Endothelial cell of umbilical vein (primary cell): ENCODE measurements at regions of chr9 and their contacts with region 1.

Region 1: DNA sequence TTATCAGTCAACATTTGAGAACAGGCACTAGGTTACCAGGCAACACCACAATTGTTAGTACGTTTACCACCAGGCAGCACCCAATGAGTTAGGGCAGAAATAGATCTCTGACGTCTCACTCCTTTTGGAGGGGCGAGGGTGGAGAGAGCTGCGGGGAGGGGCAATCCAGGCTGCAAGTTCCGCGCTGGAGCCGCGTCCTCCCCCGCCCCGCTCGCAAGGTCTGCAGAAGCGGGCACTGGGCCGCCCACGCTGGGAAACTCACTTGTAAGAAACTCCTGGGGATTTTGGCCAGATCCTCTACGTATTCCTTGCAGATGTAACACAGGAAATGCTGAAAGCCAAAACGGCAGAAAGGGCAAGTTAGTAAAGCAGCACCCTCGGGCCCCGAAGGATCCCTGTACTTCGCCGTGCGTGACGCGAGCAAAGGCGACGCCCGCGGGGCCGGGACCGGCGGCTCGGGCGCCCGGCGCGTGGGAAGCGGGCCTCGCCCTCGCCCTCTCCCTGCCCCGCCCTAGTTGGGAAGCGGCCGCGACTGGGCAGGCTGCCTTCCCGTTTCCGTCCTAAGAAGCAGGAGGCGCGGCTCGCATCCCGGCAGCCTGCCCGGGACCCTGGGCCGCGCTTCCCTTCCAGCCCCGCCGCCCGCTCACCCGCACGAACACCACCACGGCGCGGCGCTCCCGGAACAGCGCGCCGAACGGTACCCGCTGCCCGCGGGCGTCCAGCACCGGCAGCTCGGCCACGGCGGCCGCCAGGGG is 497 bp downstream of the PRXL2C start:
- DNase-seq: peak; percentile 89
- H3K4me3 ChIP-seq: peak overlapping the region; percentile 39 to 51 (median 50)
- H3K27ac ChIP-seq: peak overlapping the region; percentile 64
- H3K4me1 ChIP-seq: peaks cover 6% of the 10 kb centered on the region
- H3K27me3 ChIP-seq: no peaks in the 10 kb centered on the region
- CTCF ChIP-seq: no peak
- POLR2A ChIP-seq: no peak

Region 2: DNA sequence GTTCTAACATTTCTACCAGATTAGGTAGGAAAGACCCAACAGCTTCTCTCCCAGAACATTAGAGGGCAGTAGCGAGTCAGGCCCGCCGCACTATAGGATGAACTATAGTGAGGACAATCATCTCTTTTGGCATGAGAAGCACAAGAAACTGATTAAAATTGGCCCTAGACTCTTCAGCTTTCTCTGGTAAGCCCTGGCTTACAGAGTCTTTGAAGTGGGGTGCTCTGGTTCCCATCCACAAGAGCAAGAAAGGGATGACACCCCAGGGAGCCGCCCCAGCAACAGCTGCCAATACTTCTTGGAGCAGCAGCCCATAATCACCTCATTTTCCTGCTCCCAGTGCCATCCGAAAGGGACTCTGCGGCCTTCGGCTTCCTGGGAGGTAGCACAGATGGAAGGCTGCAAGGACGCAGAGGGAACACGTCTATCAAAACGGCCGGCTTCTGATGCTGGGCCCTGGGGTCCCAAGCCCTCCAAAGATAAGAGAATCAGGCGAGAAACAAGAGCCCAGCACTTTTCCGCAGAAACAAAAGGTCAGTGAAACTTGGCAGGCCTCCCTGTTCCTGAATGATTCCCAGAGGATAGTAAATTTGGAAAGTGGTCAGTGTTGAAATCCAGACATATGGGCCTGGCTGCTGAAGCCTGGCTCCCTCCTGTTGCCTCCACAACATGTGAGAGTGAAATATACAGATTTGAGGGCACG is 421.9 kb before region 1 on chr9:
- CTCF ChIA-PET with region 1: interaction called, 7 read pairs
- POLR2A ChIA-PET with region 1: no interaction called
- dilution Hi-C with region 1: no loop called
- intact Hi-C with region 1: loop called (anchors 5 kb)
- DNase-seq: peak; percentile 24
- H3K4me3 ChIP-seq: no peak overlapping the region
- H3K27ac ChIP-seq: no peak overlapping the region
- H3K4me1 ChIP-seq: no peaks in the 10 kb centered on the region
- H3K27me3 ChIP-seq: peaks cover 7% of the 10 kb centered on the region in 2 experiments
- CTCF ChIP-seq: peak; percentile 84 to 87
- POLR2A ChIP-seq: no peak

Region 3: GRCh38 chr9:96344458-96345180 is 310.0 kb before region 1 on chr9:
- CTCF ChIA-PET with region 1: interaction called, 4 read pairs
- POLR2A ChIA-PET with region 1: no interaction called
- dilution Hi-C with region 1: no loop called
- intact Hi-C with region 1: loop called (anchors 1 kb)
- DNase-seq: peak; percentile 83
- H3K4me3 ChIP-seq: no peak overlapping the region
- H3K27ac ChIP-seq: peak overlapping the region; percentile 51
- H3K4me1 ChIP-seq: peaks cover 18% of the 10 kb centered on the region
- H3K27me3 ChIP-seq: no peaks in the 10 kb centered on the region
- CTCF ChIP-seq: no peak
- POLR2A ChIP-seq: no peak

Region 4: DNA sequence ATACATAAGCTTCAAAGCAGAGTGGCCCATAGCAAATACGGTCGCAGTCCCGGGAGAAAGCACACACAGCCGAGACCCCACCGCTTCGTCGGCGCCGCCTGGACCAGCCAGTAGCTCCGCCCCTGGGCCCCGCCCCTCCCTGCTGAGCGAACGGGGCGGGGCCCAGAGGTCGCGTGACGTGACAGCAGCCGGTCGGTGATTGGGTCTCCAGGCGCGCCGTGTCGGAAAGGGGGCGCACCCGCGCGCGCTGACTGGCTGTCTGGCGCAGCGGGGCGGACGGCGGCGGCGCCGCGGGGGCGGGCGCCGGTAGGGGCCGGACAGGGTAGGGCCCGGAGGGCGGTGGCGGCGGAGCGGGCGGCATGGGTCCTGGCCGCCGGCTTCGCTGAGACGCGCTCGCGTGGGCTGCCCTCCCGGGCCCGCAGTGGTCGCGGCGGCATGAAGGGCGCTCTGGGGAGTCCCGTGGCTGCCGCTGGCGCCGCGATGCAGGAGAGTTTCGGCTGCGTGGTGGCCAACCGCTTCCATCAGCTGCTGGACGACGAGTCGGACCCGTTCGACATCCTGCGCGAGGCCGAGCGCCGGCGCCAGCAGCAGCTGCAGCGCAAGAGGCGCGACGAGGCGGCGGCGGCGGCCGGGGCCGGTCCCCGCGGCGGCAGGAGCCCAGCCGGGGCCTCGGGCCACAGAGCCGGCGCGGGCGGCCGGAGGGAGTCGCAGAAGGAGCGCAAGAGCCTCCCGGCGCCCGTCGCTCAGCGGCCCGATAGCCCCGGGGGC is 204.6 kb before region 1 on chr9 and contains the start of gene HABP4:
- CTCF ChIA-PET with region 1: interaction called, 3 read pairs
- POLR2A ChIA-PET with region 1: no interaction called
- dilution Hi-C with region 1: no loop called
- intact Hi-C with region 1: loop called (anchors 2 kb)
- DNase-seq: peak; percentile 93
- H3K4me3 ChIP-seq: peak within 1 kb of the TSS; percentile 50 to 66 (median 63)
- H3K27ac ChIP-seq: peak within 1 kb of the TSS; percentile 65
- H3K4me1 ChIP-seq: peaks cover 7% of the 10 kb centered on the region
- H3K27me3 ChIP-seq: peaks cover 0 to 2% of the 10 kb centered on the region in 2 experiments
- CTCF ChIP-seq: no peak
- POLR2A ChIP-seq: peak; percentile 54
- total RNA-seq, gene HABP4: 11.1 and 11.7 TPM in 2 replicates

Region 5: GRCh38 chr9:96619491-96620154 is 35.0 kb before region 1 on chr9 and contains the start of gene CDC14B:
- CTCF ChIA-PET with region 1: no interaction called
- POLR2A ChIA-PET with region 1: no interaction called
- dilution Hi-C with region 1: no loop called
- intact Hi-C with region 1: loop called (anchors 1 kb)
- DNase-seq: peak; percentile 62
- H3K4me3 ChIP-seq: peak within 1 kb of the TSS; percentile 33 to 49 (median 41)
- H3K27ac ChIP-seq: no peak within 1 kb of the TSS
- H3K4me1 ChIP-seq: peaks cover 4% of the 10 kb centered on the region
- H3K27me3 ChIP-seq: peaks cover 4 to 12% of the 10 kb centered on the region in 2 experiments
- CTCF ChIP-seq: no peak
- POLR2A ChIP-seq: no peak
- total RNA-seq, gene CDC14B: 0.74 and 0.93 TPM in 2 replicates

Region 6: DNA sequence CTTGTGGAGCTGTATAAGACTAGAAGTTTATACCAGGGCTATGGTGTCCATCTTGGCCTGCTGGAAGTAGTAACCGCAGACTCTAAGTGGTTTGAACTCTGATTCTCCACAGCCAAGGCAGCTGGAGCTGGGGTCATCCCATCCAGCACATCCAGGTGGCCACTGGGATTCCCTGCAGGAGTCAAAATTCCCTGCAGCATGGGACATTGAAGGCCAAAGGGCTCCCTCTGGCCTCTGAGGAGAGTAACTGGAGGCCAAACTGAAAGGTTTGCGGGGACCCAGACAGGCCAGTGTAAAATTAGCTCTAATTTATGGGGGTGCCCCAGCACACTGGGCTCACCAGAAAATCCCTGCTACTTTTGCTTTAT is 12.7 kb after region 1 on chr9:
- CTCF ChIA-PET with region 1: interaction called, 24 read pairs
- POLR2A ChIA-PET with region 1: no interaction called
- dilution Hi-C with region 1: no loop called
- intact Hi-C with region 1: no loop called
- DNase-seq: no peak
- H3K4me3 ChIP-seq: no peak overlapping the region
- H3K27ac ChIP-seq: no peak overlapping the region
- H3K4me1 ChIP-seq: no peaks in the 10 kb centered on the region
- H3K27me3 ChIP-seq: no peaks in the 10 kb centered on the region
- CTCF ChIP-seq: no peak
- POLR2A ChIP-seq: no peak

Region 7: DNA sequence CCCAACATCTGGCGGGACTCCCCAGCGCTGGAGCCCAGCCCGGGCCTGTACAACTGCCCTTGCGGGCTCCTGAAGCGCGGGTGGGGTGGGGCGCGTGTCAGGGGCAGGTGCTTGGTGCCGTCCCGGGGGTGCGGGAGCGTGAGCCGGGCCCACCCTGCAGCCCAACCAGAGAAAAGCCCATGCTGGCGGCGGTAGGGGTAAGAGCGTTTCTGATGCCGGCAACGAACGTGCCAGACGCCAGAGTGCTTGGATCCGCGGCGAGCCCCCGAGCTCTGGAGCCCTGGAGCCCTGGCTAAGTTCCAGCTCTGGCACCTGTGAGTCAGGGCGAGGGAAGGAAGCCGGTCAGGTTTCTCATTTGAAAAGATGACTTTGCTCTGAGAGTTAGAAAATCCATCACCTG is 65.3 kb after region 1 on chr9:
- CTCF ChIA-PET with region 1: no interaction called
- POLR2A ChIA-PET with region 1: no interaction called
- dilution Hi-C with region 1: no loop called
- intact Hi-C with region 1: no loop called
- DNase-seq: no peak
- H3K4me3 ChIP-seq: no peak overlapping the region
- H3K27ac ChIP-seq: no peak overlapping the region
- H3K4me1 ChIP-seq: no peaks in the 10 kb centered on the region
- H3K27me3 ChIP-seq: peaks cover 11 to 23% of the 10 kb centered on the region in 2 experiments
- CTCF ChIP-seq: no peak
- POLR2A ChIP-seq: no peak